K562 (cell line): ENCODE measurements at regions of chr19 and their contacts with region 1.

Region 1: DNA sequence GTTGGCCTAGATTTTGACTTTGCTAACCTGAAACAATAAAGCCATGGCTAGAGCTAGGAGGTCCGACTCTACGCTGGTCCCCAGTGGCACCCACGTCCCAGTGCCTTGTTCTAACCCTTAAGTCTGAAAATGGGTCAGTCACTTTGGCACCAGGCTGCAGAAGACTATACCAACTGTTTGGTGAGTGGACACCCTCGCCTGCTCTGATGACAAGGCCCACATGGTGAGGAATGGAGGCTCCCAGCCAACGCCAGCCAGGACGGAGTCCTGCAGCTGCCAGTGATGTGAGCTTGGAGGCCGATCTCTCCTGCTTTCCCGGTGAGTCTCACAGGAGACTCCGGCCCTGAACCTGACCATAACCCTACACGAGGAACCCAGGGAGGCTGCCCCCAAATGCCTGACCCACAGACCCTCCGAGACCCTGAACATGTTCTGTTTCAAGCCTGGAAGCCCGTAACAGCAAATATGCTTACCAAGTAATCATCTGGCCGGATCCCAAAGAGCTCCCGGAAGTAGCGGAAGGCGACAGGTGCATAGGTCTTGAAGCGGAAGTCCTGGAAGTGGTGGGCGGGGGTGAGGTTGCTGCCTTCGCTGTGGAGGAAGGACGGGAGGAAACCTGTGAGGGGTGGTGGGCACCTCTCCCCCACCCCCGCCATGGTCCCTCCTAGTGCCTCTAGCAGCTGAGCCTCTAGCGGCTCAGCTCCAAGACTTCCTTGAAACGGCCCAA is 34.1 kb upstream of the CACTIN start:
- DNase-seq: no peak
- ATAC-seq: no peak
- H3K4me3 ChIP-seq: no peak overlapping the region
- H3K27ac ChIP-seq: no peak overlapping the region
- H3K4me1 ChIP-seq: peaks cover 0 to 46% of the 10 kb centered on the region in 2 experiments; a peak in 2 of 5 replicates
- H3K27me3 ChIP-seq: no peaks in the 10 kb centered on the region
- CTCF ChIP-seq: no peak
- EP300 ChIP-seq: no peak
- POLR2A ChIP-seq: no peak
- RAD21 ChIP-seq: no peak

Region 2: DNA sequence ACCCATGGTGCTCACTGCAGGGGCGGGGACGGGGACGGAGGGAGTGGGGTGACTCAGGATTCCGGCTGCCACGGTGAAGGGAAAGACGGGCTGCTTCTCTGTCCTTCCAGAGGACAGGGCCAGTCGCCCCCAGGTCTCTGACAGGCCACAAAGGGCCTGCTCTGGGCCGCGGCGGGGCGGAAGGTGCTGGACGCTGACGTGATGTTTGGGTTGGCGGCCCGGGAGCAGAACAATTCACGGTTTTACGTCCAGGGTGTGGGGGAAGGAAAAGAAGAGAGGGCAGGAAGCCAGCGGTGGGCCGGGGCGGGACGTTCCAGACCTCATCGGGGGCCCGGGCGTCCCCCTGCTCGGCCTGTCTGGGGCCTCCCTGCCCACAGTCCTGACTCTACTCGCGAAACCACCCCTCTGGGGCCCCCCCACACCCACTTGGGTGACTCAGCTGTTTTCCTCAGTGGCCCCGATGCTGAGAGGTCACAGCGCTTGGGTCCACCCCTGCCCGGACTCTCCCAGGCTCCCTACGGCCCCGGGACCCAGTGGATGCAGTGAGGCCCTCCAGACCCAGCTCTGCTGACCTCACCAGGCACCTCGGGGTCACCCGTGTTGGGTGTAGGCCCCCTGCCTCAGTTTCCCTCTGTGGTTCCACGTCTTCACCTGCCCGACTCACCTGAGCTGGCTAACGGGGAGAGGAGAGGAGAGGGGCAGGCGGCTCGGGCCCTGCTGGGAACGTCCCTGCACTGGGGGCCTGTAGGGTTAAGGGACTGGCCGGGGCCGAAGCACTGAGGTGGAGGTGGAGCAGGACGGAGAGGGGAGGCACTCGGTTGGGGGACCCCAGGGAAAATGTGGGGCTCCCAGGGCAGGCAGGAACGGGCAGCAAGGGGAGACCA is 10.4 kb after region 1 on chr19:
- CTCF ChIA-PET with region 1: no interaction called
- POLR2A ChIA-PET with region 1: interaction called, 16 read pairs
- in situ Hi-C with region 1: no loop called
- intact Hi-C with region 1: no loop called
- DNase-seq: peak; percentile 83 to 89 (median 86)
- ATAC-seq: peak; percentile 74
- H3K4me3 ChIP-seq: peak overlapping the region; percentile 13
- H3K27ac ChIP-seq: peak overlapping the region; percentile 96
- H3K4me1 ChIP-seq: peaks cover 34 to 83% of the 10 kb centered on the region in 2 experiments
- H3K27me3 ChIP-seq: no peaks in the 10 kb centered on the region
- CTCF ChIP-seq: no peak
- EP300 ChIP-seq: no peak
- POLR2A ChIP-seq: peak; percentile 38; the same call in 1 of the 2 replicates
- RAD21 ChIP-seq: no peak

Region 3: GRCh38 chr19:3708208-3708931 is 47.7 kb after region 1 on chr19 and contains the start of gene TJP3:
- CTCF ChIA-PET with region 1: interaction called, 24 read pairs
- POLR2A ChIA-PET with region 1: no interaction called
- in situ Hi-C with region 1: loop called (anchors 5 kb)
- intact Hi-C with region 1: no loop called
- DNase-seq: peak in 1 of 4 experiments; percentile 45
- ATAC-seq: no peak
- H3K4me3 ChIP-seq: no peak within 1 kb of the TSS
- H3K27ac ChIP-seq: no peak within 1 kb of the TSS
- H3K4me1 ChIP-seq: peaks cover 13 to 39% of the 10 kb centered on the region in 2 experiments; a peak in 3 of 5 replicates
- H3K27me3 ChIP-seq: no peaks in the 10 kb centered on the region
- CTCF ChIP-seq: no peak
- EP300 ChIP-seq: no peak
- POLR2A ChIP-seq: no peak
- RAD21 ChIP-seq: no peak
- polyA plus RNA-seq, gene TJP3: 0.11 TPM in 1 of 2 experiments, not detected in the other